Naive thymus-derived CD4-positive, alpha-beta T cell (primary cell): ENCODE measurements at regions of chr16 and their contacts with region 1.

Region 1: GRCh38 chr16:88569985-88570690 is at the start of gene ZC3H18:
- DNase-seq: peak; percentile 93 to 99 (median 96)
- ATAC-seq: peak; percentile 99
- H3K4me3 ChIP-seq: peak within 1 kb of the TSS; percentile 84
- H3K4me3 Mint-ChIP-seq: peak within 1 kb of the TSS; percentile 81 to 93 (median 87)
- H3K27ac ChIP-seq: peak within 1 kb of the TSS; percentile 91
- H3K27ac Mint-ChIP-seq: peak within 1 kb of the TSS; percentile 45 to 93 (median 89)
- H3K4me1 ChIP-seq: peaks cover 21% of the 10 kb centered on the region in 2 donors
- H3K4me1 Mint-ChIP-seq: peaks cover 10 to 39% (median 34%) of the 10 kb centered on the region in 7 donors
- H3K27me3 ChIP-seq: no peaks in the 10 kb centered on the region
- H3K27me3 Mint-ChIP-seq: no peaks in the 10 kb centered on the region
- total RNA-seq, gene ZC3H18: 74.0 to 97.8 (median 82.6) TPM

Region 2: DNA sequence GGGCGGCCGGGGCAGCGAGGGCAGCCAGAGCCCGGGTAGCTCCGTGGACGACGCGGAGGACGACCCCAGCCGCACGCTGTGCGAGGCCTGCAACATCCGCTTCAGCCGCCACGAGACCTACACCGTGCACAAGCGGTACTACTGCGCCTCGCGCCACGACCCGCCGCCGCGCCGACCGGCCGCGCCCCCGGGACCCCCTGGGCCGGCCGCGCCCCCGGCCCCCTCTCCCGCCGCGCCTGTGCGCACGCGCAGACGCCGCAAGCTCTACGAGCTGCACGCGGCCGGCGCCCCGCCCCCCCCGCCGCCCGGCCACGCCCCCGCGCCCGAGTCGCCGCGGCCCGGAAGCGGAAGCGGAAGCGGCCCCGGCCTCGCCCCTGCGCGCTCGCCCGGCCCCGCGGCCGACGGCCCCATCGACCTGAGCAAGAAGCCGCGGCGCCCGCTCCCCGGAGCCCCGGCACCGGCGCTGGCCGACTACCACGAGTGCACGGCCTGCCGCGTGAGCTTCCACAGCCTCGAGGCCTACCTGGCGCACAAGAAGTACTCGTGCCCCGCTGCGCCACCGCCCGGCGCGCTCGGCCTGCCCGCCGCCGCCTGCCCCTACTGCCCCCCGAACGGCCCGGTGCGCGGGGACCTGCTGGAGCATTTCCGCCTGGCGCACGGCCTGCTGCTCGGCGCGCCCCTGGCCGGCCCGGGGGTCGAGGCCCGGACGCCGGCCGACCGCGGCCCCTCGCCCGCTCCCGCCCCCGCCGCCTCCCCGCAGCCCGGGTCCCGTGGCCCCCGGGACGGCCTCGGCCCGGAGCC is 36.0 kb before region 1 on chr16:
- CTCF ChIA-PET with region 1: no interaction called
- POLR2A ChIA-PET with region 1: interaction called, 3 read pairs
- intact Hi-C with region 1: loop called (anchors 1 to 2 kb)
- DNase-seq: peak; percentile 45 to 87 (median 77)
- ATAC-seq: peak; percentile 89
- H3K4me3 ChIP-seq: peak overlapping the region; percentile 30
- H3K4me3 Mint-ChIP-seq: peak overlapping the region in 7 of 10 donors; percentile 23 to 87 (median 55)
- H3K27ac ChIP-seq: peak overlapping the region; percentile 80
- H3K27ac Mint-ChIP-seq: peak overlapping the region in 3 of 9 donors; percentile 53 to 79 (median 72)
- H3K4me1 ChIP-seq: peaks cover 0 to 9% of the 10 kb centered on the region in 2 donors
- H3K4me1 Mint-ChIP-seq: peaks cover 9 to 16% (median 13%) of the 10 kb centered on the region in 7 donors
- H3K27me3 ChIP-seq: no peaks in the 10 kb centered on the region
- H3K27me3 Mint-ChIP-seq: peaks cover 0 to 8% (median 0%) of the 10 kb centered on the region in 5 donors

Region 3: DNA sequence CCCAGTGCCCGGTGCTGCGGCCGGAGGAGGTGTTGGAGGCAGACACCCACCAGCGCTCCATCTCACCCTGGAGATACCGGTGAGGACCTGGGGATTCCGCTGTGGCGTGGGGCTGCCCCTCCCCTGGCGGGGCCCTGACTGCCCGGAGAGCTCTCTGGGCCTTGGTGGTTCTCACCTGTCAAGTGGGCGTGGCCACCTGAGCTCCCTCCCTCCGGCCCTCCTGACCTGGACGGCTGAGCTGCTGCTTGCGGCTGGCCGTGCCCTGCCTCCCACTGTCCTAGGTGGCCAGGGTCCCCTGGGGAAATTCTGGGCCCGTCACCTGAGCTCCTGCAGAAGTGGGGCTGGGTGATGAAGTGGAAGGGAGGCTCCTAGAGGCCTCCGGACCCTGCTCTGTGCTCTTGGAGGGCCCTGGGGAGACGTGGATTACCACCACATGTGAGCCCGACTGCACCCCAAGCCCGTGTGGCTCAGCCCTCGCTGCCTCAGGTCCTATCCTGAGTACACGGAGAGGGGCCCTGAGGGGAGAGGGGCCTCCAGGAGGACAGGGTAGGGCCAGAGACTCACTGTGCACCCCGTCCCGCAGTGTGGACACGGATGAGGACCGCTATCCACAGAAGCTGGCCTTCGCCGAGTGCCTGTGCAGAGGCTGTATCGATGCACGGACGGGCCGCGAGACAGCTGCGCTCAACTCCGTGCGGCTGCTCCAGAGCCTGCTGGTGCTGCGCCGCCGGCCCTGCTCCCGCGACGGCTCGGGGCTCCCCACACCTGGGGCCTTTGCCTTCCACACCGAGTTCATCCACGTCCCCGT is 69.3 kb after region 1 on chr16:
- CTCF ChIA-PET with region 1: no interaction called
- POLR2A ChIA-PET with region 1: no interaction called
- intact Hi-C with region 1: loop called in 1 of 2 experiments (anchors 5 kb)
- DNase-seq: no peak
- ATAC-seq: no peak
- H3K4me3 ChIP-seq: no peak overlapping the region
- H3K4me3 Mint-ChIP-seq: peak overlapping the region in 3 of 10 donors; percentile 43 to 63 (median 56)
- H3K27ac ChIP-seq: no peak overlapping the region
- H3K27ac Mint-ChIP-seq: no peak overlapping the region
- H3K4me1 ChIP-seq: peaks cover 21 to 27% of the 10 kb centered on the region in 2 donors
- H3K4me1 Mint-ChIP-seq: peaks cover 27 to 50% (median 33%) of the 10 kb centered on the region in 7 donors
- H3K27me3 ChIP-seq: peaks cover 0 to 6% of the 10 kb centered on the region in 2 donors
- H3K27me3 Mint-ChIP-seq: peaks cover 0 to 42% (median 13%) of the 10 kb centered on the region in 5 donors

Region 4: DNA sequence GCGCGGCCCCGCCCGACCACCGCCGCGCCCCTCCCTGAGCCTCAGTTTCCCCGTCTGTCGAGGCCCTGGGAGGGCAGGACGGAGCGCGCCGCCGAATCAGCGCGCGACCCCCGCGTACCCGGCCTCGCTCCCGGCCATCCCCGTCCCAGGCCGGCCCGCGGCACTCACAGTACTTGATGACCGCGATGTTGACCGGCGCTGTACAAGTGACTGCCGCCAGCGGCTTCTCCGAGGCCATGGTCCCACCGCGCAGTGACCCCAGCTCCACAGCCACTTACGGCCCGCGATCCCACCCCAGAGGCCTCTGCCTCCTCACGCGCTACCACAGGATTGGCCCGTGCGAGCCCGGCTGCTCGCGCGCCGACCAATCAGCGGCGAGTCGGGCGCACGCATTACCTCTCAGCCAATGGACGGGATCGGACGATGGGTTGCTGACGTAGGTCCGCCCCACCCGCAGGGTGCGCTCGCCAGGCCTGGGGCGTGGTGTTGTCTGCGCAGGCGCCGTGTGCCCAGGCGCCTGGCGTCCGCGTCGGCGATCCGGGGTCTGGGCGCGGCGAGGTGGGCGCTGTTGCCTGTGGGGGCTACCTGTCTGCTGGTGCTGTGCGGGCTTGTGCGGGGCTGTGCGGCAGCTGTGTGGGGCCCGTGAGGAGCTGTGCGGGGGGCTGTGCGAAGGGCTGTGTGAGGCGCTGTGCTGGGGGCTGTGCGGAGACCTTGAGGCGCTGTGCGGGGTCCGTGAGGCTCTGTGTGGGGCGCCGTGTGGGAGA is 92.9 kb after region 1 on chr16 and contains the start of gene MVD:
- CTCF ChIA-PET with region 1: no interaction called
- POLR2A ChIA-PET with region 1: interaction called, 4 read pairs
- intact Hi-C with region 1: loop called in 1 of 2 experiments (anchors 1 kb)
- DNase-seq: peak; percentile 88 to 96 (median 94)
- ATAC-seq: peak; percentile 99
- H3K4me3 ChIP-seq: peak within 1 kb of the TSS; percentile 89
- H3K4me3 Mint-ChIP-seq: peak within 1 kb of the TSS; percentile 91 to 96 (median 94)
- H3K27ac ChIP-seq: peak within 1 kb of the TSS; percentile 95
- H3K27ac Mint-ChIP-seq: peak within 1 kb of the TSS; percentile 56 to 95 (median 93)
- H3K4me1 ChIP-seq: peaks cover 8% of the 10 kb centered on the region in 2 donors
- H3K4me1 Mint-ChIP-seq: peaks cover 12 to 26% (median 19%) of the 10 kb centered on the region in 7 donors
- H3K27me3 ChIP-seq: no peaks in the 10 kb centered on the region
- H3K27me3 Mint-ChIP-seq: no peaks in the 10 kb centered on the region
- total RNA-seq, gene MVD: 37.7 to 66.9 (median 42.7) TPM

Region 5: GRCh38 chr16:88686439-88687253 is 116.5 kb after region 1 on chr16 and contains the start of gene SNAI3:
- CTCF ChIA-PET with region 1: no interaction called
- POLR2A ChIA-PET with region 1: interaction called, 3 read pairs
- intact Hi-C with region 1: loop called in 1 of 2 experiments (anchors 1 kb)
- DNase-seq: peak; percentile 69 to 96 (median 80)
- ATAC-seq: peak; percentile 91
- H3K4me3 ChIP-seq: peak within 1 kb of the TSS; percentile 85
- H3K4me3 Mint-ChIP-seq: peak within 1 kb of the TSS; percentile 72 to 87 (median 81)
- H3K27ac ChIP-seq: peak within 1 kb of the TSS; percentile 77
- H3K27ac Mint-ChIP-seq: peak within 1 kb of the TSS in 8 of 9 donors; percentile 6 to 81 (median 63)
- H3K4me1 ChIP-seq: peaks cover 21 to 48% of the 10 kb centered on the region in 2 donors
- H3K4me1 Mint-ChIP-seq: peaks cover 23 to 76% (median 59%) of the 10 kb centered on the region in 7 donors
- H3K27me3 ChIP-seq: no peaks in the 10 kb centered on the region
- H3K27me3 Mint-ChIP-seq: no peaks in the 10 kb centered on the region
- total RNA-seq, gene SNAI3: 2.7 to 13.0 (median 6.1) TPM

Region 6: DNA sequence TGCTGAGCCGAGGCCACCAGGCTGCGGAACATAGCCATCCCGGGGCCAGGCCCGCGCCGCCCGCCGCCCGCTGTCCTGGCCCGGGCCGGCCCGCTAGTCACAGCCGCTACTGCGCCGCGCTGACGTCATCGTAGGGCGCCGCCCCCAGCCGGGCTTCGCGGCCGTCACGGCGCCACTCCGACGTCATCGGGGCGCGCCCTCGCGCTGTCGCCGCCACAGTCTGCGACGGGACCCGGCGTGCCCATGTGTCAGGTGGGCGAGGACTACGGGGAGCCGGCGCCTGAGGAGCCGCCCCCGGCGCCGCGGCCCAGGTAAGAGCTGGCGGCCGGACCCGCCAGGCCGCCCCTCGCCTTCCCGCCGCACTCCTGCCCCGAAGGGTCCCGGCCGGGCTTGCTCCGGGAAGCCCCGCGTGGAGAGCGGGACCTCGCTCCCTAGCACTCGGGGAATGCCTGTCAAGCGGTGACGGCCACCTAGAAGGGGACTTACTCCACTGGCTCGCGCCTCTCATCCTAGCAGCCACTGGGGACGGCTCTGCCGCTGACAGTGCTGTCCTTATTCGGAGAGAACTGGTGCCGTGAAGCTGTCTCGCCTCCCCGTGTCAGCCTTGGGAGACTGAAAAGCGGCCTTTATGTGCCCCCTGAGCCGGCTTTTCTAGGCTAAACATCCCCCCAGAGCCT is 136.3 kb after region 1 on chr16 and contains the starts of genes CTU2 and RNF166:
- CTCF ChIA-PET with region 1: no interaction called
- POLR2A ChIA-PET with region 1: interaction called, 6 read pairs
- intact Hi-C with region 1: loop called (anchors 1 kb)
- DNase-seq: peak; percentile 86 to 98 (median 92)
- ATAC-seq: peak; percentile 84
- H3K4me3 ChIP-seq: peak within 1 kb of the TSS; percentile 79
- H3K4me3 Mint-ChIP-seq: peak within 1 kb of the TSS; percentile 78 to 98 (median 94)
- H3K27ac ChIP-seq: peak within 1 kb of the TSS; percentile 88
- H3K27ac Mint-ChIP-seq: peak within 1 kb of the TSS; percentile 85 to 98 (median 97)
- H3K4me1 ChIP-seq: peaks cover 25 to 40% of the 10 kb centered on the region in 2 donors
- H3K4me1 Mint-ChIP-seq: peaks cover 31 to 45% (median 41%) of the 10 kb centered on the region in 7 donors
- H3K27me3 ChIP-seq: no peaks in the 10 kb centered on the region
- H3K27me3 Mint-ChIP-seq: no peaks in the 10 kb centered on the region
- total RNA-seq, gene CTU2: 26.0 to 43.3 (median 28.3) TPM
- total RNA-seq, gene RNF166: 99.8 to 324 (median 133) TPM

Region 7: DNA sequence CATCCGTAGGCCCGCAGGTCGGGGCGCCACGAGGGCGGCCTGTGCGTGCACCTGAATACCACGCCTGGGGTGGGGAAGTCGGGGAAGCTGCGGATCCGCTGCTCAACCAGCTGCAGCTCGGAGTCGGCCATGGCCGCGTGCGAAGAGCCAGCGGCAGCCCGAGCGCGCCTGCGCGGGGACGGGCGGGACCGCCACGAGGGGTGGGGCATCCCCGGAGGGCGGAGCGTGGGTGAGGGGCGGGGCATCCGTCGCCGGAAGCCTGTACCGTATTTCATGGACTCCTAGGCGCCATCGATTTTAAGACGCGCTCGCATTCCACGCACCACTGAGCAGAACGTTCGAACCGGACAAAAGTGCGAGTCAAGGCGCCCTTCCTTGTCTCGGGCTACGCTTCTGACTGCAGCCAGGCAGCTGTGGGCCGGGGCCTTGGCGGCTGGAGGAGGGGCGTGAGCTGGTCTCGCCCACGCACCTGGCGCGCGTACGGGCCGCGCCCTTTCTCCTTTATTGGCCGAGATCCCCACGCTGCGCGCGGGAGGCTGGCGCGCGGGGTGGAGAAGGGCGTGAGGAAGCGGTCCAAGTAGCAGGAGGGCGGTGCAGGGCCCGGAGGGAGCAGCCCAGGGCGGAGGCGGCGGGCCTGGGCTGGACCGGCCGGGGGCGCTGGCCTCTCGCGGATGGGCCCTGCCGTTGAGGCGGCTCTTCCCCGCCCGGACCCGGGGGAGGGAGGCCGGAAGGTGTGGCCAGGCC is 241.8 kb after region 1 on chr16 and contains the start of gene APRT:
- CTCF ChIA-PET with region 1: no interaction called
- POLR2A ChIA-PET with region 1: no interaction called
- intact Hi-C with region 1: loop called in 1 of 2 experiments (anchors 5 kb)
- DNase-seq: peak; percentile 92 to 100 (median 98)
- ATAC-seq: peak; percentile 95
- H3K4me3 ChIP-seq: peak within 1 kb of the TSS; percentile 97
- H3K4me3 Mint-ChIP-seq: peak within 1 kb of the TSS; percentile 92 to 99 (median 96)
- H3K27ac ChIP-seq: peak within 1 kb of the TSS; percentile 84
- H3K27ac Mint-ChIP-seq: peak within 1 kb of the TSS; percentile 79 to 98 (median 95)
- H3K4me1 ChIP-seq: peaks cover 8 to 11% of the 10 kb centered on the region in 2 donors
- H3K4me1 Mint-ChIP-seq: peaks cover 0 to 26% (median 12%) of the 10 kb centered on the region in 7 donors
- H3K27me3 ChIP-seq: no peaks in the 10 kb centered on the region
- H3K27me3 Mint-ChIP-seq: no peaks in the 10 kb centered on the region
- total RNA-seq, gene APRT: 134 to 178 (median 161) TPM

Region 8: GRCh38 chr16:89142478-89143195 is 572.5 kb after region 1 on chr16:
- CTCF ChIA-PET with region 1: no interaction called
- POLR2A ChIA-PET with region 1: no interaction called
- intact Hi-C with region 1: no loop called
- DNase-seq: no peak
- ATAC-seq: no peak
- H3K4me3 ChIP-seq: no peak overlapping the region
- H3K4me3 Mint-ChIP-seq: no peak overlapping the region
- H3K27ac ChIP-seq: no peak overlapping the region
- H3K27ac Mint-ChIP-seq: peak overlapping the region in 2 of 9 donors; percentile 51 to 74
- H3K4me1 ChIP-seq: no peaks in the 10 kb centered on the region
- H3K4me1 Mint-ChIP-seq: peaks cover 0 to 5% (median 0%) of the 10 kb centered on the region in 7 donors
- H3K27me3 ChIP-seq: no peaks in the 10 kb centered on the region
- H3K27me3 Mint-ChIP-seq: no peaks in the 10 kb centered on the region